ENCODE measurements at regions of chr6 and their contacts with region 1.

Region 1: GRCh38 chr6:116531675-116532570 is 13.6 kb downstream of the TRAPPC3L start:
- DNase-seq: peak; percentile 63 to 78 (median 66)
- ATAC-seq: peak; percentile 88
- H3K4me3 ChIP-seq: no peak overlapping the region
- H3K27ac ChIP-seq: no peak overlapping the region
- H3K4me1 ChIP-seq: peaks cover 0 to 2% of the 10 kb centered on the region in 2 experiments; a peak in 1 of 5 replicates
- H3K27me3 ChIP-seq: peaks cover 0 to 4% of the 10 kb centered on the region in 2 experiments; a peak in 2 of 5 replicates
- CTCF ChIP-seq: peak; percentile 79 to 86 (median 84)
- EP300 ChIP-seq: no peak
- POLR2A ChIP-seq: no peak
- RAD21 ChIP-seq: peak; percentile 64 to 88

Region 2: DNA sequence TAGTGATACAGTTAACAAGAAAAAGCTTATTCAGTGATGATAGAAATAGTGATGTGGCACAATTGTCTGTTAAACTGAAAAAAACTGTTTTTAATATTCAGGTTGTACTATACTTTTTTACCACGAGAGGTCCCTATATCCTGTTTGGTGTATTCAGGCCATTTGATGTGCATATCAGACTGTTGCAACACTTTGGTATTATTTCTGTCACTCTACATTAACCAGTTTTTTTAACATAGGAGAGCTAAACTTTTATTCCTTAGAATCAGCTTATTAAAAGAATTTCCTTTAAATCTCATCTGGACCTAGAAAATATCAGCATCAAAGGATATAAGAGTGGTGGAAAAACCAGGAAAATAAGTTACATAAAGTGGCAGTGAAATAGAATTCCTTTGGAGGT is 314.9 kb before region 1 on chr6:
- CTCF ChIA-PET with region 1: no interaction called
- POLR2A ChIA-PET with region 1: no interaction called
- in situ Hi-C with region 1: no loop called
- intact Hi-C with region 1: loop called (anchors 2 kb)
- DNase-seq: peak; percentile 21 to 51 (median 27)
- ATAC-seq: peak; percentile 81
- H3K4me3 ChIP-seq: no peak overlapping the region
- H3K27ac ChIP-seq: no peak overlapping the region
- H3K4me1 ChIP-seq: peaks cover 0 to 3% of the 10 kb centered on the region in 2 experiments; a peak in 2 of 5 replicates
- H3K27me3 ChIP-seq: no peaks in the 10 kb centered on the region
- CTCF ChIP-seq: peak; percentile 46 to 70 (median 52); a peak in 4 of 6 replicates
- EP300 ChIP-seq: no peak
- POLR2A ChIP-seq: no peak
- RAD21 ChIP-seq: peak; percentile 43 to 61

Region 3: DNA sequence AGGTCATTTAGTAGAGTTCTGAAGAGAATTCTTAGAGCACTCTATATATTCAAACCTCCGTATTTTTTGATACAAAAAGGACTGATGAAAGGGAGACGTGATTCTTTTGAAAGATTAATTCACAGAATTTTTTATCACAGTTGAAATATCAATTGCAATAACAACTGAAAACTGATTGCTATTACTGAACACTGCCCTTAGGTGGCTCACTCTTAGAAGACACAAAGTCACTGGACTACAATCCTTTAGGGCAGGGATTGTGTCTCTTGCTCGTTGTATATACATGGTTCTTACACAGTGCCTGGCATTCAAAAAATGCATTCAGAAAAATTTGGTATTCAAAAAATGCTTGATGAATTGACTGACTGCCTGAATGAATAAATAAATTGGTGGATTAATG is 87.8 kb before region 1 on chr6:
- CTCF ChIA-PET with region 1: no interaction called
- POLR2A ChIA-PET with region 1: no interaction called
- in situ Hi-C with region 1: no loop called
- intact Hi-C with region 1: loop called (anchors 1 kb)
- DNase-seq: peak; percentile 24 to 45 (median 34)
- ATAC-seq: peak; percentile 86
- H3K4me3 ChIP-seq: no peak overlapping the region
- H3K27ac ChIP-seq: no peak overlapping the region
- H3K4me1 ChIP-seq: no peaks in the 10 kb centered on the region; a peak in 1 of 5 replicates
- H3K27me3 ChIP-seq: no peaks in the 10 kb centered on the region
- CTCF ChIP-seq: peak; percentile 43 to 65 (median 46); a peak in 5 of 6 replicates
- EP300 ChIP-seq: no peak
- POLR2A ChIP-seq: no peak
- RAD21 ChIP-seq: peak; percentile 50 to 71

Region 4: DNA sequence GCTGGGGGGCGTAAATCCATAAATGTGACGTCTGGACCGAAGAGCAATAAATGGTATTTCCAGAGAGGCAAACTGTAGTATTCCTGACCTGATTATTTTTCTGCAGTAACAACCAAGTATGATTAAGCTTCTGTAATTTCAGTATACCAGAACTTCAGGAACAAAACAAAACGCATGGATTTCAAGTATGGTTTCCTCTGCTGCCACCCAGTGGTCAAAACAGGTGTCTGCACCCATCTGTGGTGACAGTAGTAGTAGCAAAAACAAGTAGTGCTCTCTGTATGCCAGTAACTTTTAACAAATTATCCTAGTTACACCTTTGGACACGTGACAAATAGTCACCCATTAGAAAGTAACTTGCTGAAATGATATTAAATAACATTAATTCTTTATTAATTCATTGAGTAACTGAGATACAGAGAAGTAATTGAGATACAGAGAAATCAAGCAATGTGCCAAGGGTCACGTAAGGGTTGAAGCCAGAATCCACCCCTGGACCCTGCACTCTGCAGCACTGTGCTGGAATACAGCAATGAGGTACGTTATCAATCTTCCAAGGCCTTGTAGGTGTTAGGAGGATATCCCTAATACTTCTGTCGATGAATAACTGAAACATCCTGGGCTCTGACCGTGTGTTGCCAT is 29.6 kb after region 1 on chr6:
- CTCF ChIA-PET with region 1: interaction called, 5 read pairs
- POLR2A ChIA-PET with region 1: interaction called, 3 read pairs
- in situ Hi-C with region 1: no loop called
- intact Hi-C with region 1: loop called (anchors 1 kb)
- DNase-seq: peak; percentile 62 to 84 (median 67)
- ATAC-seq: peak; percentile 82
- H3K4me3 ChIP-seq: no peak overlapping the region
- H3K27ac ChIP-seq: no peak overlapping the region
- H3K4me1 ChIP-seq: peaks cover 15 to 17% of the 10 kb centered on the region in 2 experiments; a peak in 4 of 5 replicates
- H3K27me3 ChIP-seq: no peaks in the 10 kb centered on the region
- CTCF ChIP-seq: peak; percentile 76 to 88 (median 84)
- EP300 ChIP-seq: no peak
- POLR2A ChIP-seq: no peak
- RAD21 ChIP-seq: peak; percentile 81 to 85

Region 5: DNA sequence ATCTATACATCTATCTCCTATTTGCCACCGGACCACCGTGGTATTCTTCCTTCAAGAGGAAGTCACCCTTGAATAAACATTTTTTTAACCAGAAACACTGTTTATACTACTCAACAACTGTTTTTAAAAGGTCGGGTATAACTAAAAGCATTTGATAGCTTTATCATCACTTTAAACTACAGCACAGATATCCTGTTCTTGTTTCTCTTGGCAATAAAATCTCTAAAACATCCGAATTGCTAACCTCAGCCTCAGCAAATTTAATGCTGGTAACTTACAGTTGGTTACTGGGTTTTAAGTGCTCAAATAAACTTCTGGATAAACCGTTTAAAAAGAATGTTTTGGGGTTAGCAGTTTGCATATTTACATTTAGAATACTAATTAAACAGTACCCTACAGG is 116.2 kb after region 1 on chr6:
- CTCF ChIA-PET with region 1: interaction called, 8 read pairs
- POLR2A ChIA-PET with region 1: no interaction called
- in situ Hi-C with region 1: no loop called
- intact Hi-C with region 1: loop called (anchors 1 kb)
- DNase-seq: no peak
- ATAC-seq: no peak
- H3K4me3 ChIP-seq: no peak overlapping the region
- H3K27ac ChIP-seq: no peak overlapping the region
- H3K4me1 ChIP-seq: no peaks in the 10 kb centered on the region
- H3K27me3 ChIP-seq: no peaks in the 10 kb centered on the region
- CTCF ChIP-seq: no peak
- EP300 ChIP-seq: no peak
- POLR2A ChIP-seq: no peak
- RAD21 ChIP-seq: no peak

Region 6: DNA sequence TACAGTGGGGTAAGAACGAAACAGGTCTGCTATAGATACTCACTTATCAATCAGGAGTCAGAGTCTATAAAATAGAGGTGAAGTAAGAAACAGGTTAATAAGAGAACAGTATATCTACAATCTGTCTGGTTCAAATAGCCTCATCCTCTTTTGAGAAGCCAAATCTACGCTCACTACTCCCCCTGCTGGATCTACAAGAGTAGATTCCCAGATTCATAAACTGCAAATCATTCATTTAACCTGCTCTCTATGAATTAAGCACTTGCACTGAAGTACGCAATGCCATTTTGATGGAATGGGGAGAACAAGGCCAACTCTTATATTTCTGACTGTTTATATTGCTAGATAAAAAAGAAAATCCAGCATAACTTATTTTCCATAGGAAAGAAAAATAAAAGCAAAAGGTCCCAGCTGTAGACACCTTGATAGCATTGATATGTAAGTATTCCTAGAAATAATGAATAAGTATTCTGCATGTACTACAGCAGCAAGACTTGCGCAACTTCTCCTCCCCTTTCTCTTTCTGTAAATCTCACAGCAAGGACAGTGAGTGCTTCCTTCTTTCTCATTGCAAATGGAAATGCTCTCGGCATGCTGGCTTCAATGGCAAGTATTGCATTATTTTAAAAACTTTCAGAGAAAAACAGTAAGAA is 437.4 kb after region 1 on chr6:
- CTCF ChIA-PET with region 1: no interaction called
- POLR2A ChIA-PET with region 1: no interaction called
- in situ Hi-C with region 1: no loop called
- intact Hi-C with region 1: loop called (anchors 5 kb)
- DNase-seq: peak; percentile 19 to 64 (median 42)
- ATAC-seq: peak; percentile 89
- H3K4me3 ChIP-seq: no peak overlapping the region
- H3K27ac ChIP-seq: no peak overlapping the region
- H3K4me1 ChIP-seq: no peaks in the 10 kb centered on the region
- H3K27me3 ChIP-seq: no peaks in the 10 kb centered on the region
- CTCF ChIP-seq: peak; percentile 58 to 69 (median 63)
- EP300 ChIP-seq: no peak
- POLR2A ChIP-seq: no peak
- RAD21 ChIP-seq: peak; percentile 28 to 75

Measured in K562 (cell line).